GM12878 (cell line): ENCODE measurements at regions of chr12 and their contacts with region 1.

Region 1: GRCh38 chr12:13864081-13864673 is 117.2 kb downstream of the GRIN2B start:
- DNase-seq: peak; percentile 11
- ATAC-seq: peak; percentile 94
- H3K4me3 ChIP-seq: no peak overlapping the region
- H3K27ac ChIP-seq: no peak overlapping the region
- H3K4me1 ChIP-seq: no peaks in the 10 kb centered on the region
- H3K27me3 ChIP-seq: no peaks in the 10 kb centered on the region; a peak in 1 of 4 replicates
- CTCF ChIP-seq: peak; percentile 88 to 96 (median 93)
- EP300 ChIP-seq: no peak
- POLR2A ChIP-seq: no peak
- RAD21 ChIP-seq: peak; percentile 74

Region 2: DNA sequence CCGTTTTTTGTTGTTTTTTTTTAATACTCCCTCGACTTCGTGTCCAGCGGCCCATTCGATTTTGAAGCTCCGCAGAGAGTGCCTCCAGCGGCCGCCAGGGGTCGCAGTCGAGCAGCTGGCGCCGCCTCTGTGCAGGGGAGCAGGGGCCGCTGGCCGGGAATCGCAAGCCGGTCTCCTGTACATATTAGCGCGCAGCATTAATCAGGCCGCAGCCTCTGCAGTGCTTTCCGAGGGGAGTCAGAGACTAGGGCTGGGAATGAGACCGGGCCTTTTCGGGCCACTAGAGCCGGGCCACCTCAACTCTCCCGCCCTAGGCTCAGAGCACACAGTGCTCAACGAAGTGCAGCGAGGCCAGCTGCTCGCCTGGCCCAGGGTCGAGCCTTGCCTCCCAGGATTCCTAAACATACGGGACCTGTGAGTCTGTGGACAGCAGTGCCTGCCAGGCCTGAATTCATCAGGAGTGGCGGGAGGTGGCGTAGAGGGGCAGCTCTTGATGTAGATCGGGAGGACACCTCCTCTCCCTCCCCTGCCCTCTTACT is 585.9 kb before region 1 on chr12:
- CTCF ChIA-PET with region 1: interaction called, 5 read pairs
- POLR2A ChIA-PET with region 1: no interaction called
- RAD21 ChIA-PET with region 1: no interaction called
- SMC1A ChIA-PET with region 1: no interaction called
- in situ Hi-C with region 1: no loop called
- intact Hi-C with region 1: loop called (anchors 10 kb)
- DNase-seq: no peak
- ATAC-seq: peak; percentile 93
- H3K4me3 ChIP-seq: no peak overlapping the region
- H3K27ac ChIP-seq: no peak overlapping the region
- H3K4me1 ChIP-seq: no peaks in the 10 kb centered on the region
- H3K27me3 ChIP-seq: peaks cover 0 to 7% of the 10 kb centered on the region in 2 experiments; a peak in 2 of 4 replicates
- CTCF ChIP-seq: peak; percentile 68 to 85 (median 75)
- EP300 ChIP-seq: no peak
- POLR2A ChIP-seq: no peak
- RAD21 ChIP-seq: peak; percentile 41

Region 3: GRCh38 chr12:13875744-13876143 is 11.6 kb after region 1 on chr12:
- CTCF ChIA-PET with region 1: interaction called, 14 read pairs
- POLR2A ChIA-PET with region 1: no interaction called
- RAD21 ChIA-PET with region 1: no interaction called
- SMC1A ChIA-PET with region 1: interaction called, 3 read pairs
- in situ Hi-C with region 1: no loop called
- intact Hi-C with region 1: no loop called
- DNase-seq: no peak
- ATAC-seq: no peak
- H3K4me3 ChIP-seq: no peak overlapping the region
- H3K27ac ChIP-seq: no peak overlapping the region
- H3K4me1 ChIP-seq: no peaks in the 10 kb centered on the region
- H3K27me3 ChIP-seq: no peaks in the 10 kb centered on the region; a peak in 1 of 4 replicates
- CTCF ChIP-seq: no peak
- EP300 ChIP-seq: no peak
- POLR2A ChIP-seq: no peak
- RAD21 ChIP-seq: no peak

Region 4: GRCh38 chr12:13941258-13942249 is 77.4 kb after region 1 on chr12:
- CTCF ChIA-PET with region 1: interaction called, 18 read pairs
- POLR2A ChIA-PET with region 1: no interaction called
- RAD21 ChIA-PET with region 1: interaction called, 11 read pairs
- SMC1A ChIA-PET with region 1: interaction called, 6 read pairs
- in situ Hi-C with region 1: no loop called
- intact Hi-C with region 1: loop called (anchors 1 kb)
- DNase-seq: no peak
- ATAC-seq: peak; percentile 92
- H3K4me3 ChIP-seq: no peak overlapping the region
- H3K27ac ChIP-seq: no peak overlapping the region
- H3K4me1 ChIP-seq: no peaks in the 10 kb centered on the region
- H3K27me3 ChIP-seq: peaks cover 0 to 3% of the 10 kb centered on the region in 2 experiments; a peak in 1 of 4 replicates
- CTCF ChIP-seq: peak; percentile 28 to 72 (median 53); a peak in 5 of 6 replicates
- EP300 ChIP-seq: no peak
- POLR2A ChIP-seq: no peak
- RAD21 ChIP-seq: peak; percentile 63

Region 5: GRCh38 chr12:13992106-13992505 is 127.9 kb after region 1 on chr12:
- CTCF ChIA-PET with region 1: no interaction called
- POLR2A ChIA-PET with region 1: no interaction called
- RAD21 ChIA-PET with region 1: no interaction called
- SMC1A ChIA-PET with region 1: no interaction called
- in situ Hi-C with region 1: no loop called
- intact Hi-C with region 1: no loop called
- DNase-seq: no peak
- ATAC-seq: no peak
- H3K4me3 ChIP-seq: no peak overlapping the region
- H3K27ac ChIP-seq: no peak overlapping the region
- H3K4me1 ChIP-seq: no peaks in the 10 kb centered on the region
- H3K27me3 ChIP-seq: no peaks in the 10 kb centered on the region
- CTCF ChIP-seq: no peak
- EP300 ChIP-seq: no peak
- POLR2A ChIP-seq: no peak
- RAD21 ChIP-seq: no peak